ENCODE measurements at regions of chr3 and their contacts with region 1.

Region 1: GRCh38 chr3:15241341-15241740 is 35.3 kb downstream of the CAPN7 start:
- DNase-seq: peak in 6 of 9 donors; percentile 26 to 47 (median 38)
- ATAC-seq: peak; percentile 74
- H3K4me3 ChIP-seq: no peak overlapping the region
- H3K4me3 Mint-ChIP-seq: no peak overlapping the region
- H3K27ac ChIP-seq: no peak overlapping the region
- H3K27ac Mint-ChIP-seq: peak overlapping the region in 2 of 9 donors; percentile 36 to 52
- H3K4me1 ChIP-seq: no peaks in the 10 kb centered on the region
- H3K4me1 Mint-ChIP-seq: peaks cover 4 to 16% (median 9%) of the 10 kb centered on the region in 7 donors
- H3K27me3 ChIP-seq: no peaks in the 10 kb centered on the region
- H3K27me3 Mint-ChIP-seq: no peaks in the 10 kb centered on the region

Region 2: DNA sequence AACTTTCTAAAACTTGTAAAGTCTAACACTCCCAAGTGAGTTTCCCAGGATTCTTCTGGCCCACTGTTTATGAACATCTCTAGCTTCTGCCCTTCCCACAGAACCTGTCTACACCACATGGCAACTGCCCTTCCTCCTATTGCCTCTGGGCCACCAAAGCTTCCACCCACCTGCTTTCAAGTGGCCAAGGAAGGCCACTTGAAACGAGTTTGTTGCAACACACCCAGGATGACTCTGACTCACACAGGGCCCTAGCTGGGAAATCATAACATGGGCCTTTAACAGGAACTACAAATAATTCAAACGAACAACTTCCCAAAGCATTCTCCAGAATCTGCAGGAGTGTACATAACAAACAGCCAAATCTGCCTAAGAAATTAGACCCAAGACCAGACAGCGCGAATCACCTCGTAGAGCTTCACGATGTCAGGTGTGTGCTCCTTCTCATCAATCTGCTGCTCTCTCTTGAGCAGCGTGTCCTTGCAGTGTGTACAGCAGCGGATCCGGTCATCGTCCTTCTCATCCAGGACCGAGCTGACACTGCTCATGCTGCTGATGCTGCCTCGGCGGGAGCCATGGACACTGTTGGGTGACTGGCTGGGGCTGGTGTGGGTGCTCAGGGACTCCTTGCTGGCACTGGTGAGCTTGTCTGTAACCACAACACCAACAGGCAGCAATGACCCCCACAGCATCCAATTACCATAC is 159.2 kb before region 1 on chr3:
- CTCF ChIA-PET with region 1: no interaction called
- POLR2A ChIA-PET with region 1: no interaction called
- intact Hi-C with region 1: no loop called
- DNase-seq: no peak
- ATAC-seq: peak; percentile 29
- H3K4me3 ChIP-seq: no peak overlapping the region
- H3K4me3 Mint-ChIP-seq: no peak overlapping the region
- H3K27ac ChIP-seq: no peak overlapping the region
- H3K27ac Mint-ChIP-seq: peak overlapping the region in 3 of 9 donors; percentile 6 to 51 (median 27)
- H3K4me1 ChIP-seq: no peaks in the 10 kb centered on the region
- H3K4me1 Mint-ChIP-seq: peaks cover 0 to 17% (median 0%) of the 10 kb centered on the region in 7 donors
- H3K27me3 ChIP-seq: no peaks in the 10 kb centered on the region
- H3K27me3 Mint-ChIP-seq: no peaks in the 10 kb centered on the region

Region 3: GRCh38 chr3:15108082-15108545 is 133.2 kb before region 1 on chr3:
- CTCF ChIA-PET with region 1: no interaction called
- POLR2A ChIA-PET with region 1: no interaction called
- intact Hi-C with region 1: loop called in 1 of 2 experiments (anchors 5 kb)
- DNase-seq: peak; percentile 51 to 78 (median 63)
- ATAC-seq: peak; percentile 97
- H3K4me3 ChIP-seq: no peak overlapping the region
- H3K4me3 Mint-ChIP-seq: peak overlapping the region in 1 of 10 donors; percentile 29
- H3K27ac ChIP-seq: no peak overlapping the region
- H3K27ac Mint-ChIP-seq: peak overlapping the region in 2 of 9 donors; percentile 31 to 38
- H3K4me1 ChIP-seq: peaks cover 3 to 5% of the 10 kb centered on the region in 2 donors
- H3K4me1 Mint-ChIP-seq: peaks cover 3 to 9% (median 6%) of the 10 kb centered on the region in 7 donors
- H3K27me3 ChIP-seq: no peaks in the 10 kb centered on the region
- H3K27me3 Mint-ChIP-seq: peaks cover 4 to 17% (median 5%) of the 10 kb centered on the region in 5 donors

Region 4: DNA sequence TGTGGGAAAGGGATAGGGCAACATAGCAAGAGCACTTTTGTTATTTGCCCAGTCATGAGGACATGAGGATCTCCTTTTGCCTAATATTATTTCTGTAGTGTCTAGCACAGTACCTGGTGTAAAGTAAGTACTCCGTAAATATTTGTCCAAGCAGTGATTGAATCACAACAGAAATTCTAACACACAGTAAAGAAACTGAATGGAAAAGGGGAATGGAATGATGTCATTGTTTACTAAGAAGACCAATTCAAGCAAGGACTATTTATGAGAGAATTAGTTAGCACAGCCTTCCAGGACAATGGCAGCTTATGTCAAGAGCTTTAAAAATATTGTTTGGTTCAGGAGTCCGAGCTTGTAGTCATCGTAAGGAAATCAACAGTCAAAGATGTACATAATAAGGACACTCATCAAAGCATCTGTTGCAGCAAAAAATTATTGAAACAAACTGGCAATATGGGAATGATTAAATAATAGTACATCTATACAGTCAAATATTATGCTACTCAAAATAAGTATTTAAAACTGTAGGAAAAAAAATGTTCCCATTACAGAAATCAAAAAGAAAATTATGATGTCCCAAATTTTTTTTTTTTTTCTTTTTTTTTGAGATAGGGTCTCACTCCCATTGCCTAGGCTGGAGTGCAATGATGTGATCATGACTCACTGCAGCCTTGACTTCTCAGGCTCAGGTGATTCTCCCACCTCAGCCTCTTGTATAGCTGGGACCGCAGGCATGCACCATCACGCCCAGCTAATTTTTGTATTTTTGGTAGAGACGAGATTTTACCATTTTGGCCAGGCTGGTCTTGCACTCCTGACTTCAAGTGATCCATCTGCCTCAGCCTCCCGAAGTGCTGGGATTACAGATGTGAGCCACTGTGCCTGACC is 17.4 kb before region 1 on chr3:
- CTCF ChIA-PET with region 1: no interaction called
- POLR2A ChIA-PET with region 1: no interaction called
- intact Hi-C with region 1: loop called in 1 of 2 experiments (anchors 2 kb)
- DNase-seq: no peak
- ATAC-seq: no peak
- H3K4me3 ChIP-seq: no peak overlapping the region
- H3K4me3 Mint-ChIP-seq: no peak overlapping the region
- H3K27ac ChIP-seq: no peak overlapping the region
- H3K27ac Mint-ChIP-seq: peak overlapping the region in 1 of 9 donors; percentile 28
- H3K4me1 ChIP-seq: no peaks in the 10 kb centered on the region
- H3K4me1 Mint-ChIP-seq: peaks cover 0 to 13% (median 5%) of the 10 kb centered on the region in 7 donors
- H3K27me3 ChIP-seq: no peaks in the 10 kb centered on the region
- H3K27me3 Mint-ChIP-seq: no peaks in the 10 kb centered on the region

Region 5: DNA sequence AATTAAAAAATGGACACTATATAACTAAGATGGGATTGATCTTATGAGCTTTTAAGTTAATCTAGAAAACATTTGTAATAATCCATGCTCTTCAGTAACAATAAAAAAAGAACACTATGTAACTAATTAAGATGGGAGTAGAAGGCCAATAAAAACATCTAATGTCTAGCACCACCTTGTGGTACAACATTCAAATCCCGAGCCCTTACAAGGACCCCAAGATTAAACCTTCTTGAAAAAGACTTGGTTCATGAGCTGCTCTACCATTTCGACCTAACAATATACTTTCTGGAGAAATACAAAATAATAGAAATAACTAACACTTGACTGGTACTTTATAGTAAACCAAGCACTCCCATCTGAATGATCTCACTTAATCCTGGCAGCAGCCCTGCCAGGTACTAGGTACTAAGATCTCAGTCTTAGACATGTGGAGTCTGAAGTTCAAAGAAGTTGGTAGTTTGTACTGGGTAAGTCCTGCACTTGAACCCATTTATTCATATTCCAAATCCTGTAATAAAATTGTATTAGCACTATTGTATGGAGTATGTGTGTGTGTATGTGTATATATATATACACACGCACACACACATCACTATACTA is 164.2 kb after region 1 on chr3:
- CTCF ChIA-PET with region 1: interaction called, 3 read pairs
- POLR2A ChIA-PET with region 1: no interaction called
- intact Hi-C with region 1: loop called (anchors 1 kb)
- DNase-seq: peak in 7 of 9 donors; percentile 28 to 63 (median 49)
- ATAC-seq: peak; percentile 75
- H3K4me3 ChIP-seq: no peak overlapping the region
- H3K4me3 Mint-ChIP-seq: no peak overlapping the region
- H3K27ac ChIP-seq: no peak overlapping the region
- H3K27ac Mint-ChIP-seq: no peak overlapping the region
- H3K4me1 ChIP-seq: peaks cover 0 to under 1% of the 10 kb centered on the region in 2 donors
- H3K4me1 Mint-ChIP-seq: peaks cover 0 to 7% (median 1%) of the 10 kb centered on the region in 7 donors
- H3K27me3 ChIP-seq: no peaks in the 10 kb centered on the region
- H3K27me3 Mint-ChIP-seq: no peaks in the 10 kb centered on the region